Activated CD8-positive, alpha-beta T cell treated with anti-CD3 and anti-CD28 coated beads for 36 hours (primary cell): ENCODE measurements at regions of chr12 and their contacts with region 1.

Region 1: DNA sequence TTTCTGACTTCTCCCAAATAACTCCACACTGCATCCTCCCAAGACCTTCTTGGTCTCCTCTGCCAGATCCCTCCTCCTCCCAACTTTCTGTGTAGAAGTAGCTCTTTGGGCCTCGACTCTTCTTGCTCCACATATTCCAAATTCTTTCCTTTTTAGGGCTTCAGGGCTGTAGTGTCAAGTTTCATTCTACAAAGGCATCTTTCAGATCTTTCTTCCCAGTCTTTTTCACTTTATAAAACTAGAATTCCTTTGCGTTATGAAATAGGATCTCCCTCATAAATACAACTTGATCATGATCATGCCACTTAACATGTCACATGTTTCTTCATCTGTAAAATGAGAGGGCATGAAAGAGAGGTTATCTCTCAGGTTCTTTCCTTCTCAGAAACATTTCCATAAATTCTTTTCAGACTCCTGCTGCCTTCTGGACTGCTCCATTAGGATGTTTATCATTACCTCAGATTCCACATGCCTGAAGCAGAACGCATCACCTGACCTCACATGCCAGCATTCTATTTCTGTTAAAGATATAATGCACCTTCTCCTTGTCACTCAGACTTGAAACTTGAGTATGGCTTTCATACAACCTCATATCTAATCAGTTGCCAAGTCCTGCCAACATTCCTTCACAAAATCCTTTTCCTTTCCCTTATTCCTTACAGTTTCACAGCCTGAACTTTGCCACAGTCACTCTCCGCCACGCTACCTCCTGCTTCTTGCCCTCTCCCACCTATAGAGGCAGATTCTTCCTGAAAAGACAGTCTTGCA is 8.5 kb downstream of the SLC38A1 start:
- DNase-seq: no peak
- ATAC-seq: no peak
- H3K4me3 Mint-ChIP-seq: no peak overlapping the region
- H3K27ac Mint-ChIP-seq: no peak overlapping the region
- H3K4me1 Mint-ChIP-seq: peaks cover 43% of the 10 kb centered on the region
- H3K27me3 Mint-ChIP-seq: no peaks in the 10 kb centered on the region
- CTCF ChIP-seq: no peak

Region 2: GRCh38 chr12:46152159-46152855 is 108.0 kb before region 1 on chr12:
- CTCF ChIA-PET with region 1: no interaction called
- POLR2A ChIA-PET with region 1: no interaction called
- intact Hi-C with region 1: no loop called
- DNase-seq: no peak
- ATAC-seq: no peak
- H3K4me3 Mint-ChIP-seq: no peak overlapping the region
- H3K27ac Mint-ChIP-seq: no peak overlapping the region
- H3K4me1 Mint-ChIP-seq: peaks cover 5% of the 10 kb centered on the region
- H3K27me3 Mint-ChIP-seq: peaks cover 3% of the 10 kb centered on the region
- CTCF ChIP-seq: no peak

Region 3: GRCh38 chr12:46224386-46224785 is 35.9 kb before region 1 on chr12:
- CTCF ChIA-PET with region 1: no interaction called
- POLR2A ChIA-PET with region 1: interaction called, 11 read pairs
- intact Hi-C with region 1: no loop called
- DNase-seq: no peak
- ATAC-seq: no peak
- H3K4me3 Mint-ChIP-seq: no peak overlapping the region
- H3K27ac Mint-ChIP-seq: peak overlapping the region; percentile 83
- H3K4me1 Mint-ChIP-seq: peaks cover 81% of the 10 kb centered on the region
- H3K27me3 Mint-ChIP-seq: no peaks in the 10 kb centered on the region
- CTCF ChIP-seq: no peak

Region 4: DNA sequence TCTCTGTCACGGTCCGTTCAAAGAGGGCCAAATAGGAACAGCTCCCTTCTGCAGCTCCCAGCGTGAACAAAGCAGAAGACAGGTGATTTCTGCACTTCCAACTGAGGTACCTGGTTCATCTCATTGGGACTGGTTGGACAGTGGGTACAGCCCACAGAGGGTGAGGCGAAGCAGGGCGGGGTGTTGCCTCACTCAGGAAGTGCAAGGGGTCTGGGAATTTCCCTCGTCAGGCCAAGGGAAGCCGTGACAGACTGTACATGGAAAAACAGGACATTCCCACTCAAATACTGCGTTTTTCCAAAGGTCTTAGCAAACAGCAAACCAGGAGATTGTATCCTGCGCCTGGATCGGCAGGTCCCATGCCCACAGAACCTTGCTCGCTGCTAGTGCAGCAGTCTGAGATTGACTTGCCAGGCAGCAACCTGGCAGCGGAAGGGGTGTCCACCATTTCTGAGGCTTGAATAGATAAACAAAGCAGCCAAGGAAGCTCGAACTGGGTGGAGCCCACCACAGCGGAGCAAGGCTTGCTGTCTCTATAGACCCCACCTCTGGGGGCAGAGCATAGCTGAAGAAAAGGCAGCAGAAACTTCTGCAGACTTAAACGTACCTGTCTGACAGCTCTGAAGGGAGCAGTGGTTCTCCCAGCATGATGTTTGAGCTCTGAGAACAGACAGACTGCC is 14.2 kb before region 1 on chr12:
- CTCF ChIA-PET with region 1: interaction called, 5 read pairs
- POLR2A ChIA-PET with region 1: interaction called, 12 read pairs
- intact Hi-C with region 1: no loop called
- DNase-seq: no peak
- ATAC-seq: peak; percentile 39
- H3K4me3 Mint-ChIP-seq: peak overlapping the region; percentile 9
- H3K27ac Mint-ChIP-seq: peak overlapping the region; percentile 77
- H3K4me1 Mint-ChIP-seq: peaks cover 89% of the 10 kb centered on the region
- H3K27me3 Mint-ChIP-seq: no peaks in the 10 kb centered on the region
- CTCF ChIP-seq: no peak